AG04449 (cell line): ENCODE measurements at regions of chr5 and their contacts with region 1.

Region 1: DNA sequence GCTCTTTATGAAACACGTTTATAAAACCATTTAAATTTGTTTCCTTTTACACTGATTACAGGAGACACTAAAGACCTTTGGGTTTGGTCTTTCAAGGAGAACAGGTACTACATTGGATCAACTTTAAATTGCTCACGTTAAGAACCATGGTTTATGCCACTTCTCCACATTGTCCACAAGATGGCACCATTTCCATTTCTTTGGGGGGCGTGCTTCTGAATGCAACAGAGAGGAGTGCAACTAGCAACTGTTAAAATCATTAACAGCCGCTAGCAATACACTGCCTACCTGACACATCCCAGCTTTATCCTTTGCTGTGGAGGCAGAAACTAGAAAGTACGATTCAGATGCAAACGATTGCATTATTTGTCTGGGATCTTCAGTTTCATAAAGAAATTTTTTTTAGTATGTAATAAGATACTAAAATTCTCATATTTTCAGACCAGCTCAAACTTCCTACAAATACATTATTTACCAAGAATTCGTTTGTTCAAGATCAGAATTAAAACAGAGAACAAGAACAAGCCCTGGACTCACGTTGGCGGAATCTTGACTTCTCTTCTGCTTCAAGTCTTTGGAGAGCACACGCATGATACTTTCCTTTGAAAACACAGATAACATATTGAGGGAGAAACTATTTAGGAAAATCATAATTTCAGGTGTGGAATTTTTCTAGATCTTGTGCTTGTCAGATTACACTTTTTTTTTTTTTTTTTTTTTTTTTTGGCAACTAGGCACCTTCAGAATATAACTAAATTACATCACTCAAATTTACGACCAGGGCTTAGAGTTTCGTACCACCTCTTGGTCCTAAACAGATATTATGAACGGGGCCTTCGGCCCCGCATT is 702 bp downstream of the CDC20B start:
- DNase-seq: peak; percentile 16
- H3K4me3 ChIP-seq: peak overlapping the region; percentile 60
- CTCF ChIP-seq: peak; percentile 67

Region 2: GRCh38 chr5:55159763-55160492 is 12.3 kb before region 1 on chr5 and contains the start of gene GPX8:
- CTCF ChIA-PET with region 1: interaction called, 25 read pairs
- POLR2A ChIA-PET with region 1: no interaction called
- DNase-seq: peak; percentile 59
- H3K4me3 ChIP-seq: peak within 1 kb of the TSS; percentile 69
- CTCF ChIP-seq: peak; percentile 26

Region 3: DNA sequence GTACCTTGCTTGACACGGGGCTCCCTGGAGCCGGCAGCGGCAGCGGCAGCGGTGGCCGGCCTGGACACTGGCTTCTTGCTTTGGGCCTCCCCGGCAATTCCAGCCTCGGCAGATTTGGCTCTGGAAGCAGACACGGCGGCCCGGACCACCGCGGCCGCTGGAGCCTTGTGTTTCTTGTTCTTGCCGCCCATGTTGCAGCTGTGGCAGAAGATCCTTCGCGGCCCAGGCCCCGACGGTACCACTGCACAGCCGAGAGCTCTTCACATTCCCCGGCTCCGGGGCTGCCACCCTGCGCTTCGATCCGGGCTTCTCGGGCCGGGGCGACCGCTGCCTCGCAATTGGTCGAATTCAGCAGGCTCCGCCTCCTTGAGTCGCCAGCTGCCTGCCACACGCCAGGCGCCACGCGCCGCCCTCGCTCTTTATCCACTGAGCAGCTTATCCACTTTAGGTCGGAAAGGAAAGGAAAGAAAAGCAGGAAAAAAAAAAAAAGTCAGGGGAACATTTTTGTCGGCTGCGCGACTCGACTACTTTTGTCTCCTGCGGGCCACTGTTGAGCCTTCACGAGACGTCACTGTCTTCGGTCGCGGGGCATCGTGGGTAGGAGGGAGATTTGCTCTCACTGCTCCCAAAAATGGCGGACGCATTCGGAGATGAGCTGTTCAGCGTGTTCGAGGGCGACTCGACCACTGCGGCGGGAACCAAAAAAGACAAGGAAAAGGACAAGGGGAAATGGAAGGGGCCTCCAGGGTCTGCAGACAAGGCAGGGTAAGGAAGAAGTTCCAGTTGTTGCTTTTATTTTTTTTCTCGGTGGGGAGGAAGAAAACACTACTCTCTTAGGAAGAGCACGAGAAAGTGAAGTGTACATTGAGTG is 135.3 kb after region 1 on chr5 and contains the starts of genes DHX29 and MTREX:
- CTCF ChIA-PET with region 1: interaction called, 15 read pairs
- POLR2A ChIA-PET with region 1: no interaction called
- DNase-seq: peak; percentile 61
- H3K4me3 ChIP-seq: peak within 1 kb of the TSS; percentile 86
- CTCF ChIP-seq: no peak